Dorsolateral prefrontal cortex (tissue), 120 donors: ENCODE measurements at regions of chr1 and their contacts with region 1.

Region 1: DNA sequence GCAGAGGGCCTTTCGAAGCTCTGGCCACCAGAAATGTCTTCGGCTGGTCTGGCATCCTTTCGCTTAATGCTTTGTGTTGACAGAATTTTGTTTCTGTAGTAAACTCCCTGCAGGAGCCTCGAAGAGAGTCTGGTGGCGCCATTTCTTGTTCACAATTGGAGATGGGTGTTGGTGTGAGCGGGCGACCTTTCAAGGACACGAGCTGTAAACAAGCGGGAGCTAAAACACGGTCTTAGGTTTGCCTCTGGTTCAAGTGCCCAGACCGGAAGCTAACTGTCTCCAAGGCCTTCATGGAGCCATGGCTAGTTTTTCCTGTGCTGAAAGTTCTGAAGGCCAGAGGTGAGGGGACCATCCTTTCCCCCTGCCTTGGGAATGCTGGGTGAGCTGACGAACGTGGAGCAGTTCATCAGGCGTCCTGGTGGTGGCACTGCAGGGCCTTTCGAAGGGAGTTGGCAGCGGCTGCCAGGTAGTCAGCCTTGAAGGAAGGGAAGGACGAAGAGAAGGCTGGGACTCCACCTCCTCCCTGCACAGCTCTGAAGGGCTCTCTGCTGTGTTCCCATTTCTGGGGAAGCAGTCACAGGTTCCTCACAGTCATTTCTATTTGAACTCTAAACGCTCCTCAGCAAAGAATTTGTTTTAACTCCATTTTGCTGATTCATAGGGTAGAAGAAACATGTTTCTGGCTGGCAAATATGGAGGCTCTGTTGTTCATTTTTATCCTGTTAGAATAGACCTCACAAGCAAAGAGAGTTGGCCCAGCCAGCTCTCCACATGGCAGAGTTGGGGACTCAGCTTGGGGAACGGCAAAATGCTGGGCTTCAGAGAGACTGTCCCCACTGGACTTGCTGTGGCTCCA is 35.2 kb downstream of the URB2 start:
- DNase-seq: peak; percentile 77 to 89 (median 86)
- H3K4me3 ChIP-seq: peak overlapping the region in 1 of 59 donors; percentile 13
- H3K27ac ChIP-seq: peak overlapping the region in 51 of 59 donors; percentile 4 to 79 (median 58)
- H3K27me3 ChIP-seq: no peaks in the 10 kb centered on the region
- CTCF ChIP-seq: peak; percentile 79 to 98 (median 94)

Region 2: GRCh38 chr1:229843627-229844238 is 182.5 kb after region 1 on chr1:
- intact Hi-C with region 1: loop called in 1 of 2 experiments (anchors 5 kb)
- DNase-seq: peak in 5 of 10 donors; percentile 37 to 58 (median 53)
- H3K4me3 ChIP-seq: no peak overlapping the region
- H3K27ac ChIP-seq: peak overlapping the region in 5 of 59 donors; percentile 3 to 45 (median 17)
- H3K27me3 ChIP-seq: peaks cover 0 to 3% (median 0%) of the 10 kb centered on the region in 45 donors
- CTCF ChIP-seq: peak in 50 of 56 donors; percentile 10 to 72 (median 47)